PC-9 (cell line): ENCODE measurements at regions of chr9 and their contacts with region 1.

Region 1: DNA sequence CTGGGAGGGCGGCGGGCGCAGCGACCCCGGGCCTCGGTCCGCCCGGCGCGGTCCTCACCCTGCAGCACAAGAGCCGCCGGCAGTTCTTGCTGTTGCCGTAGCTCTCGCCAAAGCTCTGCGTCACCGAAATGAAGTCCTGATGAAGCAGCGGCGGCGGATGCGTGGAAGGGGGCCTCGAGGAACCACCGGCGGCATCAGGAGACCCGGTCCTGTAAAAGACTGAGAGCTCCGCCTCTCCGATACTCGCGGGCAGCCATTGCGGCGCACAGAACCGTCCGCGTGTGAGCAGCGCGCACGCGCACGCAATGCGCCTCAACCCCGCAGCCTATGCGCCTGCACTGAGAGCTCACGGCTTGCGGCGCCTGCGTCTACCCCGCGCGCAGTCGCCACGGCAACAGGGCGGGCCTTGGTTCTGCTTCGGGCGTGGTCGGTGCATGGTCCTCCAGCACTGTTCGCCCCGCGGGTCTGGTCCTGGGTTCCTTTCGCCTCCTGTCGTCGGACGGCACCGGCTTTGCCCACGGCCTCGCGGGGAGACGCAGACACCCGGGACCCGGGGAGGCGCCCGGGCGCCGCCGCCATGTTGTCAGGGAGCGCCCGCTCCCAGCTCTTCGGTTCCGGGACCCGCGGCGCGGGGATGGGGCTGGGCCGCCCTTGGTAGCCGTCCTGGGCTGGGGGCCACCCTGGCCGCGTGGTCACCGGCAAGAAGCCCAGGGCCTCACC is 9.3 kb upstream of the GRIN1 start:
- DNase-seq: peak; percentile 76 to 93
- H3K4me3 ChIP-seq: peak overlapping the region; percentile 86
- H3K27ac ChIP-seq: peak overlapping the region; percentile 54
- H3K4me1 ChIP-seq: peaks cover 28% of the 10 kb centered on the region
- H3K27me3 ChIP-seq: no peaks in the 10 kb centered on the region
- CTCF ChIP-seq: no peak

Region 2: DNA sequence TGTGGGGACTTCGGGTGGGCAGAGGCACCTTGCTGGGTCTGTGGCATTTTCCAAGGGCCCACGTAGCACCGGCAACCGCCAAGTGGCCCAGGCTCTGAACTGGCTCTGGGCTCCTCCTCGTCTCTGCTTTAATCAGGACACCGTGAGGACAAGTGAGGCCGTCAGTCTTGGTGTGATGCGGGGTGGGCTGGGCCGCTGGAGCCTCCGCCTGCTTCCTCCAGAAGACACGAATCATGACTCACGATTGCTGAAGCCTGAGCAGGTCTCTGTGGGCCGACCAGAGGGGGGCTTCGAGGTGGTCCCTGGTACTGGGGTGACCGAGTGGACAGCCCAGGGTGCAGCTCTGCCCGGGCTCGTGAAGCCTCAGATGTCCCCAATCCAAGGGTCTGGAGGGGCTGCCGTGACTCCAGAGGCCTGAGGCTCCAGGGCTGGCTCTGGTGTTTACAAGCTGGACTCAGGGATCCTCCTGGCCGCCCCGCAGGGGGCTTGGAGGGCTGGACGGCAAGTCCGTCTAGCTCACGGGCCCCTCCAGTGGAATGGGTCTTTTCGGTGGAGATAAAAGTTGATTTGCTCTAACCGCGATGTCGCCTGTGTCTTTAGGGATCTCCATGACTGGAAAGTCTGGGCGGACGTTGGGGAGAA is 20.9 kb before region 1 on chr9:
- CTCF ChIA-PET with region 1: interaction called, 18 read pairs
- POLR2A ChIA-PET with region 1: no interaction called
- intact Hi-C with region 1: no loop called
- DNase-seq: no peak
- H3K4me3 ChIP-seq: no peak overlapping the region
- H3K27ac ChIP-seq: no peak overlapping the region
- H3K4me1 ChIP-seq: no peaks in the 10 kb centered on the region
- H3K27me3 ChIP-seq: no peaks in the 10 kb centered on the region
- CTCF ChIP-seq: no peak

Region 3: GRCh38 chr9:137168905-137169856 is 39.6 kb after region 1 on chr9:
- CTCF ChIA-PET with region 1: interaction called, 14 read pairs
- POLR2A ChIA-PET with region 1: interaction called, 4 read pairs
- intact Hi-C with region 1: loop called (anchors 5 kb)
- DNase-seq: peak; percentile 66 to 80
- H3K4me3 ChIP-seq: peak overlapping the region; percentile 75
- H3K27ac ChIP-seq: no peak overlapping the region
- H3K4me1 ChIP-seq: peaks cover 13% of the 10 kb centered on the region; the same call in 1 of the 2 replicates
- H3K27me3 ChIP-seq: no peaks in the 10 kb centered on the region
- CTCF ChIP-seq: no peak